BJ (cell line): ENCODE measurements at regions of chr17 and their contacts with region 1.

Region 1: DNA sequence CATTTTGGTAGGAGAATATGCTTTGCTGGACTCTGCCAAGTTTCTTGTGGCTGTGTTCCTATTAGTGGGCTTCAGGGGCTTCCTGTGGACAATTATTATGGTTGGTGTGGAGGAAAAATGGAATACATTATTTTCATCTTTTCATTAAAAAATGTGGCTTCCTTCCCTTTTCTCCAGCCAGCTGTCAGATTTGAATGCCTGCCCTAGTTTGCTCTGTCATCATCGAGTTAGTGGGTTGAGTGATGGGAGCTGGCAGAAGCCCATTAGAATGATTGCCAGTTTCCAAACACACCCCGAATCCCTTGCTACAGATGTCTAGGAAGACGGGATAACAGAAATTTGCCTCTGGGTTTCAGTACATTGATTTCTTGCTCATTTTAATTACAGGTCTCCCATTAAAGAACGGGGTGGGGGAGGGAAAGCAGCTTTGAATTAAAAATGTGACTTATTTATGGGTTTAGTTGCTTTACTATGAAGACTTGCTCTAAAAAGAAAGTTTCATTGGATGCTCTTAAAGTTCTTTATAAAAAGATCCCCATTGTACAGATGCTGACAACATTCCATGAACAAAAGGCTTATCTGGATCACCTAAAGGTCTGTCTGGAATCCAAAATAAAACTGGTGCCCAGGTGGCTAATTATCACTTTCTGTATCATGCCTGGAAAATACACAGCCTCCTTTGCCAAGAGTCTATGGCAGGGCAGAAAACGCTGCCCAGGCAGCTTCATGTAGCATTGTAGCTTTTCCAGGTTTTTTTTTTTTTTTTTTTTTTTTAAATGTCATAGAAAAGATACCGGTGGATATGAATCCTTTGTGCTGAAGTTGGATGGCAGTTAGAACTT is 103.6 kb downstream of the PRKCA start:
- DNase-seq: no peak
- H3K4me3 ChIP-seq: no peak overlapping the region
- H3K27me3 ChIP-seq: no peaks in the 10 kb centered on the region
- CTCF ChIP-seq: no peak

Region 2: GRCh38 chr17:66228887-66229782 is 176.9 kb before region 1 on chr17 and contains the start of gene APOH:
- CTCF ChIA-PET with region 1: no interaction called
- POLR2A ChIA-PET with region 1: no interaction called
- DNase-seq: no peak
- H3K4me3 ChIP-seq: no peak within 1 kb of the TSS
- H3K27me3 ChIP-seq: peaks cover 2% of the 10 kb centered on the region; the same call in 1 of the 2 replicates
- CTCF ChIP-seq: no peak
- polyA plus RNA-seq, gene APOH: not detected in 2 replicates

Region 3: GRCh38 chr17:66395961-66396360 is 10.1 kb before region 1 on chr17:
- CTCF ChIA-PET with region 1: no interaction called
- POLR2A ChIA-PET with region 1: no interaction called
- DNase-seq: no peak
- H3K4me3 ChIP-seq: no peak overlapping the region
- H3K27me3 ChIP-seq: no peaks in the 10 kb centered on the region
- CTCF ChIP-seq: no peak

Region 4: GRCh38 chr17:66469890-66470289 is 63.8 kb after region 1 on chr17:
- CTCF ChIA-PET with region 1: no interaction called
- POLR2A ChIA-PET with region 1: interaction called, 20 read pairs
- DNase-seq: no peak
- H3K4me3 ChIP-seq: no peak overlapping the region
- H3K27me3 ChIP-seq: no peaks in the 10 kb centered on the region
- CTCF ChIP-seq: no peak